ENCODE measurements at regions of chr19 and their contacts with region 1.

Region 1: GRCh38 chr19:18007044-18007916 is 690 bp upstream of the ARRDC2 start:
- DNase-seq: peak; percentile 66 to 90 (median 80)
- ATAC-seq: peak; percentile 57
- H3K4me3 ChIP-seq: peak overlapping the region; percentile 48 to 61
- H3K4me3 Mint-ChIP-seq: peak overlapping the region; percentile 88
- H3K27ac ChIP-seq: peak overlapping the region; percentile 69 to 72
- H3K27ac Mint-ChIP-seq: peak overlapping the region; percentile 89
- H3K4me1 ChIP-seq: peaks cover 43% of the 10 kb centered on the region
- H3K4me1 Mint-ChIP-seq: peaks cover 40% of the 10 kb centered on the region
- H3K27me3 ChIP-seq: no peaks in the 10 kb centered on the region
- H3K27me3 Mint-ChIP-seq: no peaks in the 10 kb centered on the region
- CTCF ChIP-seq: peak; percentile 97

Region 2: GRCh38 chr19:18023622-18024251 is 16.5 kb after region 1 on chr19:
- CTCF ChIA-PET with region 1: interaction called, 19 read pairs
- POLR2A ChIA-PET with region 1: interaction called, 16 read pairs
- intact Hi-C with region 1: loop called (anchors 2 kb)
- DNase-seq: peak; percentile 48 to 93 (median 82)
- ATAC-seq: peak; percentile 75
- H3K4me3 ChIP-seq: peak overlapping the region in 1 of 2 experiments; percentile 24
- H3K4me3 Mint-ChIP-seq: peak overlapping the region; percentile 67
- H3K27ac ChIP-seq: peak overlapping the region; percentile 68 to 70
- H3K27ac Mint-ChIP-seq: peak overlapping the region; percentile 94
- H3K4me1 ChIP-seq: peaks cover 42% of the 10 kb centered on the region
- H3K4me1 Mint-ChIP-seq: peaks cover 56% of the 10 kb centered on the region
- H3K27me3 ChIP-seq: no peaks in the 10 kb centered on the region
- H3K27me3 Mint-ChIP-seq: no peaks in the 10 kb centered on the region
- CTCF ChIP-seq: no peak

Region 3: GRCh38 chr19:18058208-18059030 is 51.1 kb after region 1 on chr19:
- CTCF ChIA-PET with region 1: interaction called, 256 read pairs
- POLR2A ChIA-PET with region 1: interaction called, 40 read pairs
- intact Hi-C with region 1: loop called (anchors 1 kb)
- DNase-seq: peak; percentile 67 to 92 (median 83)
- ATAC-seq: peak; percentile 98
- H3K4me3 ChIP-seq: peak overlapping the region in 1 of 2 experiments; percentile 23
- H3K4me3 Mint-ChIP-seq: peak overlapping the region; percentile 18
- H3K27ac ChIP-seq: peak overlapping the region; percentile 35 to 60
- H3K27ac Mint-ChIP-seq: peak overlapping the region; percentile 86
- H3K4me1 ChIP-seq: peaks cover 17% of the 10 kb centered on the region
- H3K4me1 Mint-ChIP-seq: peaks cover 12% of the 10 kb centered on the region
- H3K27me3 ChIP-seq: no peaks in the 10 kb centered on the region
- H3K27me3 Mint-ChIP-seq: no peaks in the 10 kb centered on the region
- CTCF ChIP-seq: peak; percentile 95

Region 4: GRCh38 chr19:18167975-18168645 is 160.8 kb after region 1 on chr19:
- CTCF ChIA-PET with region 1: interaction called, 3 read pairs
- POLR2A ChIA-PET with region 1: interaction called, 3 read pairs
- intact Hi-C with region 1: loop called (anchors 1 to 2 kb)
- DNase-seq: peak in 8 of 9 experiments; percentile 44 to 77 (median 64)
- ATAC-seq: peak; percentile 98
- H3K4me3 ChIP-seq: no peak overlapping the region
- H3K4me3 Mint-ChIP-seq: no peak overlapping the region
- H3K27ac ChIP-seq: no peak overlapping the region
- H3K27ac Mint-ChIP-seq: no peak overlapping the region
- H3K4me1 ChIP-seq: peaks cover 6% of the 10 kb centered on the region
- H3K4me1 Mint-ChIP-seq: peaks cover 2% of the 10 kb centered on the region
- H3K27me3 ChIP-seq: no peaks in the 10 kb centered on the region
- H3K27me3 Mint-ChIP-seq: no peaks in the 10 kb centered on the region
- CTCF ChIP-seq: peak; percentile 69

Measured in CD8-positive, alpha-beta T cell (primary cell).